ENCODE measurements at regions of chr6 and their contacts with region 1.

Region 1: GRCh38 chr6:43013843-43014433 is at the starts of genes KLHDC3 and MEA1:
- DNase-seq: peak; percentile 99
- H3K4me3 ChIP-seq: peak within 1 kb of the TSS; percentile 68
- H3K4me3 Mint-ChIP-seq: peak within 1 kb of the TSS; percentile 89
- H3K27ac Mint-ChIP-seq: peak within 1 kb of the TSS; percentile 80
- H3K4me1 ChIP-seq: 0 out of 2 replicates have a peak, but pooled peaks cover 4% of the 10 kb centered on the region
- H3K4me1 Mint-ChIP-seq: peaks cover 21% of the 10 kb centered on the region
- H3K27me3 ChIP-seq: no peaks in the 10 kb centered on the region
- H3K27me3 Mint-ChIP-seq: no peaks in the 10 kb centered on the region
- CTCF ChIP-seq: no peak
- total RNA-seq, gene KLHDC3: 62.9 and 66.8 TPM in 2 replicates
- total RNA-seq, gene MEA1: 60.3 and 62.3 TPM in 2 replicates

Region 2: GRCh38 chr6:42782622-42783176 is 231.2 kb before region 1 on chr6:
- CTCF ChIA-PET with region 1: no interaction called
- POLR2A ChIA-PET with region 1: interaction called, 12 read pairs
- intact Hi-C with region 1: no loop called
- DNase-seq: peak; percentile 73 to 80
- H3K4me3 ChIP-seq: peak overlapping the region; percentile 88
- H3K4me3 Mint-ChIP-seq: peak overlapping the region; percentile 94
- H3K27ac Mint-ChIP-seq: peak overlapping the region; percentile 99
- H3K4me1 ChIP-seq: peaks cover 31% of the 10 kb centered on the region
- H3K4me1 Mint-ChIP-seq: no peaks in the 10 kb centered on the region
- H3K27me3 ChIP-seq: no peaks in the 10 kb centered on the region
- H3K27me3 Mint-ChIP-seq: no peaks in the 10 kb centered on the region
- CTCF ChIP-seq: no peak

Region 3: DNA sequence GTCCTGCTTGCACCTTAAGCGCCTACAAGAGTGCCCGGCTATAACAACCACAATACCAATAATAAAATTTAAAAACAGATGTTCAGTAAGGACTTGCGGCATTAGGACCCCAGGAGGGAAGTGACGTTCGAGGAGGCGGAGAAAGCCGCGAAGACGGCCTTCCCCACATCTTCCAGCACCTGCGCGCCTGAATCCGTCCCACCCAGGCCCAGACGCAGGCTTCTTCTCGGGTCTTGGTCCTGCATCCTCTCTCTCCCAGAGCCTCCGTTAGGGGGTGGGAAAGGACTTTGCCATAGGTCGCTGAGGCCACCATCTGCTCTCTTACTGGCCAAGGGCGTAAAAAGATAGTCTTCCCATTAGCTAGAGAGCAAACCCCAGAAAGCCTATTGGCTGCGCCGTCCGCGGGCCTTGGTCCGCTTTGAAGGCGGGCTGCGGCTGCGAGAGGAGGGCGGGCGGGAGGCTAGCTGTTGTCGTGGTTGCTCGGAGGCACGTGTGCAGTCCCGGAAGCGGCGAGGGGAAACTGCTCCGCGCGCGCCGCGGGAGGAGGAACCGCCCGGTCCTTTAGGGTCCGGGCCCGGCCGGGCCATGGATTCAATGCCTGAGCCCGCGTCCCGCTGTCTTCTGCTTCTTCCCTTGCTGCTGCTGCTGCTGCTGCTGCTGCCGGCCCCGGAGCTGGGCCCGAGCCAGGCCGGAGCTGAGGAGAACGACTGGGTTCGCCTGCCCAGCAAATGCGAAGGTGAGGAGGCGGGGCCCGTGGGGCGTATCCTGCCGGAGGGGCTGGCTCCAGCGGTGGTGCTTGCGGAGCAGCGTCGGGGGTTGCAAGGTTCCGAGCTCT is 84.7 kb before region 1 on chr6 and contains the start of gene CNPY3:
- CTCF ChIA-PET with region 1: interaction called, 14 read pairs
- POLR2A ChIA-PET with region 1: interaction called, 7 read pairs
- intact Hi-C with region 1: no loop called
- DNase-seq: peak; percentile 95 to 96
- H3K4me3 ChIP-seq: peak within 1 kb of the TSS; percentile 56
- H3K4me3 Mint-ChIP-seq: peak within 1 kb of the TSS; percentile 100
- H3K27ac Mint-ChIP-seq: peak within 1 kb of the TSS; percentile 76
- H3K4me1 ChIP-seq: peaks cover 8% of the 10 kb centered on the region
- H3K4me1 Mint-ChIP-seq: peaks cover 13% of the 10 kb centered on the region
- H3K27me3 ChIP-seq: no peaks in the 10 kb centered on the region
- H3K27me3 Mint-ChIP-seq: no peaks in the 10 kb centered on the region
- CTCF ChIP-seq: no peak
- total RNA-seq, gene CNPY3: 49.2 and 56.1 TPM in 2 replicates

Region 4: GRCh38 chr6:42984001-42984923 is 29.7 kb before region 1 on chr6 and contains the start of gene PPP2R5D:
- CTCF ChIA-PET with region 1: interaction called, 3 read pairs
- POLR2A ChIA-PET with region 1: interaction called, 24 read pairs
- intact Hi-C with region 1: no loop called
- DNase-seq: peak; percentile 97
- H3K4me3 ChIP-seq: peak within 1 kb of the TSS; percentile 66
- H3K4me3 Mint-ChIP-seq: peak within 1 kb of the TSS; percentile 91
- H3K27ac Mint-ChIP-seq: peak within 1 kb of the TSS; percentile 87
- H3K4me1 ChIP-seq: no peaks in the 10 kb centered on the region
- H3K4me1 Mint-ChIP-seq: peaks cover 36% of the 10 kb centered on the region
- H3K27me3 ChIP-seq: no peaks in the 10 kb centered on the region
- H3K27me3 Mint-ChIP-seq: no peaks in the 10 kb centered on the region
- CTCF ChIP-seq: no peak
- total RNA-seq, gene PPP2R5D: 44.4 and 45.0 TPM in 2 replicates

Region 5: DNA sequence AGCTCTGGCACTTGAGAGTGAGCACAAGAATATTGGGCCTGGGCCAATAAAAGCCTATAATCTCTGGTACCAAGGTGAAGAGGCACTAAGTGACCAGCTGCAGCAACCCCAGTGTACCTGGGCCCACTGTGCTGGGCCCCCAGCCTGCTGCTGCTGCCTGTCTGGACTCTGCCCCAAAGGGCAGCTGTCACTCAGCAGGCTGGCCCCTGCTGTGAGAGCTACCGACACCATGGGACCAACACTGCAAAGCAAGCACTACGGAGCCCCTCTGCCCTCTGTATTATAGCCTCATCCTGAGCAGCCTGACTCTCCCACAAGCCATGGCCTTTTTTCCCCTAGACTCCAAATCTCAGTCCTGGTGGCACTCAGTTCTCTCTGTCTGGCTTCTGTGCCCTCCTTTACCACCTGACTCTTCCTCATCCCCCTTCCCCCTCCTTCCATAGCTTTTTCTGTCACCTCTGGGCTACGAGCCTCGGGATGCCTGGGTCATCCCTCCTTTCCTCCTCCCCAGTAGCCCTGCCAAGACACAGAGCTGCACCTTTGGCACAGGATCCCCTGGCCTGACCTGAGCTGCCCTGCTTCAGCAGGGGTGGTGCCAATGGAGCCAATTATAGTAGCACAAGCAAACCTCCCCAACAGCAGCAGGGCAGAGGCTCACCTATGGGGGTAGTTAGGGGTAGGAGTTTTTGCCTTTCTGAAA is 21.7 kb after region 1 on chr6:
- CTCF ChIA-PET with region 1: no interaction called
- POLR2A ChIA-PET with region 1: interaction called, 11 read pairs
- intact Hi-C with region 1: no loop called
- DNase-seq: no peak
- H3K4me3 ChIP-seq: no peak overlapping the region
- H3K4me3 Mint-ChIP-seq: peak overlapping the region; percentile 18
- H3K27ac Mint-ChIP-seq: no peak overlapping the region
- H3K4me1 ChIP-seq: no peaks in the 10 kb centered on the region
- H3K4me1 Mint-ChIP-seq: peaks cover 6% of the 10 kb centered on the region
- H3K27me3 ChIP-seq: no peaks in the 10 kb centered on the region
- H3K27me3 Mint-ChIP-seq: no peaks in the 10 kb centered on the region
- CTCF ChIP-seq: no peak

Region 6: DNA sequence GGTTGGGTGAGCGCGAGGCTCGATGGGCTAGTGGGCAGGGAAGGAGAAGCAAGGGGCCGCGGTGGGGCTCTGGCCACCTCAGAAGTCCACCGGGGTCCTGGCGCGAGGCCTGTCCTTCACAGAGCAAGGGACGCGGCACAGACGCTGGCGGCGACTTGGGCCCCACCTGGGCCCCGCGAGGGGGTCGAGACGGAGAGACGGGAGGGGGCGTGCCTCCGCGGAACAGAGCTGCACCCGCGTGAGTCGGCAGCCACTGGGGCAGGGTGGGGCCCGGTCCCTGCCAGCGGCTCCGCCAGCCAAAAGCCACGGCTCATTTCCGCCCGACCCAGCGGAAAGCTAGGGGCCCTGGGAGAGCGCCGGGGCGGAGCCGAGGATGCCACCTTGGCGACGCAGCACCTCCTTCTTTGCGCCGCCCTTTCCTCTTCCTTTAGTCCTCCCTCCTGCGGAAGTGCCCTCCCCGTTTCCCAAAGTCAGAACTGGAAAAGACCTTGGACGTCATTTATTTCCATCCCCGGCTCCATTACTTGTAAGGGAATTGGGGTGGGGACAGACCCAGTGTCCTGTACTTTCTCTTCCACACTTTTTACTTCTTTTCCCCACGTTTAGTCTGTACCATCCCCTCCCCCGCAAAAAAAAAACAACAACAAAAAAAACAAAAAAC is 39.7 kb after region 1 on chr6 and contains the start of gene CUL7:
- CTCF ChIA-PET with region 1: interaction called, 3 read pairs
- POLR2A ChIA-PET with region 1: interaction called, 12 read pairs
- intact Hi-C with region 1: no loop called
- DNase-seq: peak; percentile 93
- H3K4me3 ChIP-seq: peak within 1 kb of the TSS; percentile 71
- H3K4me3 Mint-ChIP-seq: peak within 1 kb of the TSS; percentile 100
- H3K27ac Mint-ChIP-seq: peak within 1 kb of the TSS; percentile 97
- H3K4me1 ChIP-seq: peaks cover 25% of the 10 kb centered on the region
- H3K4me1 Mint-ChIP-seq: peaks cover 37% of the 10 kb centered on the region
- H3K27me3 ChIP-seq: no peaks in the 10 kb centered on the region
- H3K27me3 Mint-ChIP-seq: no peaks in the 10 kb centered on the region
- CTCF ChIP-seq: no peak
- total RNA-seq, gene CUL7: 25.3 and 26.7 TPM in 2 replicates

Region 7: GRCh38 chr6:43059168-43060033 is 45.5 kb after region 1 on chr6 and contains the starts of genes KLC4 and MRPL2:
- CTCF ChIA-PET with region 1: no interaction called
- POLR2A ChIA-PET with region 1: interaction called, 22 read pairs
- intact Hi-C with region 1: loop called (anchors 1 kb)
- DNase-seq: peak; percentile 96 to 98
- H3K4me3 ChIP-seq: peak within 1 kb of the TSS; percentile 80
- H3K4me3 Mint-ChIP-seq: peak within 1 kb of the TSS; percentile 88
- H3K27ac Mint-ChIP-seq: peak within 1 kb of the TSS; percentile 82
- H3K4me1 ChIP-seq: peaks cover 29% of the 10 kb centered on the region
- H3K4me1 Mint-ChIP-seq: peaks cover 34% of the 10 kb centered on the region
- H3K27me3 ChIP-seq: no peaks in the 10 kb centered on the region
- H3K27me3 Mint-ChIP-seq: no peaks in the 10 kb centered on the region
- CTCF ChIP-seq: no peak
- total RNA-seq, gene KLC4: 47.7 and 52.7 TPM in 2 replicates
- total RNA-seq, gene MRPL2: 123 and 124 TPM in 2 replicates